Cardiac septum (tissue), 1 donor: ENCODE measurements at regions of chr1 and their contacts with region 1.

Region 1: DNA sequence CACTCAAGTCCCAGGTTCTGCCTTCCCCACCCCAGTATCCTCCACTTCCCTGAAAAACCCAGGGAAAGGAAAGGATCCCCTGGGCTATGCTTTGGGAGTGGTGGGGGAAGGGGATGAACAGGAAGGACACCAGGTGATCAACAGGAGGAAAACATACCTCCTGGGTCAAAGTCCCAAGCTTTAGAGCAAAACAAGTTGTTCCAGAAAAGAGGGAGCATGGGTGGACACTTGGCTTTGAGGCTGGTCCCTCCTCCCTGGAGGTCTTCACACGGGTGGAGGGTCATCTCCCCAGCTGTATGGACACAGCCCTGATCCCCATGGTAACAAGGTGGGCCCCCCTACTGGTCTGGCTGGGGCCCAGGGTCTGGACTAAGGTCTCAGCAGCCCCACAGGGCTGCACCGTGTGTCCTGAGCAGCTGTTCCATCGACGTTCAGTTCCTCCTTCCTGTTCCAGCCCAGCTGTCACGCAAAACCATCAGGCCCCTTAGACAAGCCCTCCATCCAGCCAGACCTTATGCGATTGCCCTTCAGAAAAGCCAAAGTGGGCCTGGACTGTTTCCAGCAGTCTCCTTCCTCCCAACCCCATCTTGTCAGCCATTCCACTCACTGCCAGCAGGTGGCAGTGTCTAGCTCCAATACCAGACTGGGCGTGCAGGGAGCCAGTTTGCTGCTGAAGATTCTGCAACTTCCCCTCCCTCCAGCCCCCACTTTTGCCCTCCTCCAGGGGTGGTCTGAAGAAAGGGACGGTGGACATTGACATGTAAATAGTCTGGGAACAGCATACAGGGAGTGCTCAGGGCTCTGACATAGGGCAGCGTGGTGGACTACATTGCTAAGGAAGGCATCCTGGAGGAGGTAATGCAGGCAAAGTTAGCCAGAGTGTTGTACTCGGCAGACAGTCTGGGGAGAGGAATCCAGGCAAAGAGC is 2.9 kb upstream of the PDZK1IP1 start:
- DNase-seq: peak; percentile 86

Region 2: DNA sequence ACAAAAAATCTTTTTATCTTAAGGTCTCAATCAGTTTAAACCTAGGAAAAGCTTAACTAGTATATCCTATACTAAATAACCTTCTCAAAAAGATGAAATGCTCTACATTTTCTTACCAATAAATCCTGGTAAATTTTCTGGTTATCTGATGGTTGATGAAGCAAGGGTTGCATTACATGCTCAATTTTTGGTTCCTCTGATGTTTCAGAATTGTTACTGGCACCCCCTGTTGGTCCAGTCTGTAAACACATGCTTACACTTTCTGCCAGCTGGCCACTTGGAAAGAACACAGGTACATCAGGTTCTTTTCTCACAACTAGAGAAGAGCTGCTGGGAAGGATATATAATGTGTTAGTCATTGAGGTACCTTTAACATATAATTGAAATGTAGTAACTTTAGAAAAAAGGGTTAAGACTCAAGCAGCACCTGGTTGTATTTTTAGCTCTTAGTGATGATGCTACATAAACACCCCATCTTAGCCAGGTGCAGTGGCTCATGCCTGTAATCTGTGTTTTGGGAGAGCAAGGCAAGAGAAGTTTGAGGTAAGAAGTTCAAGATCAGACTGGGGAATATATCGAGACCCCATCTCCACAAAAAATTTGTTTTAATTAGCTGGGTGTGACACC is 70.2 kb after region 1 on chr1:
- intact Hi-C with region 1: loop called (anchors 2 kb)
- DNase-seq: no peak